GM12878 (cell line): ENCODE measurements at regions of chr12 and their contacts with region 1.

Region 1: DNA sequence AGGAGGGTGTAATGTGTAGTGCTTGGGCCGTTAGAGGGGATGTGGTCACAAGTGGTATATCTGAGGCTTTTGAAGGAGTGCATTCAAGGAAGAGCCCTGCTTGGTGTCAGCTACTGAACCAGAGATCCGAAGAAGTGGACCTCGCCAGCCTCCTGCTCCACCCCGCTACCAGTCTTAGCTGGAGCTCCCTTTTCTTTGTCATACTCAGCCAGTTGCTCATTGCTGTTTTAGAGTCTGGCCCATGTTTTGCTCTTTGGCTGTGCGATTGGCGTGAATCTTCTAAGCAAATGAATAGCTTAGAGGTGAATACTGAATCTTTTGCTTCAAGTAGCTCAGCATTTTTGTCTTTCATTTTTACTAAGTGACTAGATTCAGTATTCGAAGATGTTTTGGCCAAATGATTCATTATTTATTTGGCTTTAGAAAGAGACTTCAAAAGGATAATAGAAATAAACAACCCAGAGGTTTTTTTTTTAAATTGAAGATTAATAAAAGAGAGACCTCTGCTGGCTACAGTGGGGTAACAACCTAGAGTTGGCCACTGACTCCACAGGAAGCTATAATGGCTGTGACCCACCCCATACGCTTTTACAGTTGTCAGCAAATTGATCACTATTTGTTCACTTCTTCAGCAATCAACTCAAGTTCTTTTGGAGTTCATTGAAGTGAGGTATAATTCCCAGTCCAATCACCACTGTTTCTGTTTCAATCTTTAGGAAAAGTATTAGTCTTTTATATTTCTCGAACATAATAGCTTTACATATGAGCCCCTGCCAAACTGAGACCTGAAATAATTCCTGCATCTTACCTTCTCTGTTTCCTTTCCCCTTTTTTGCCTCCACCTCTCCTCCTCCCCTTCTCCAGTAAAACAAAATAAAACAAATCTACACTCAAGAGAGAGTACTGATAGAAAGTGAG is 19.9 kb downstream of the CDKN1B start:
- DNase-seq: peak; percentile 45
- ATAC-seq: peak; percentile 95
- H3K4me3 ChIP-seq: peak overlapping the region; percentile 48; the same call in 1 of the 2 replicates
- H3K27ac ChIP-seq: peak overlapping the region; percentile 71
- H3K4me1 ChIP-seq: peaks cover 5% of the 10 kb centered on the region
- H3K27me3 ChIP-seq: no peaks in the 10 kb centered on the region
- CTCF ChIP-seq: peak; percentile 53 to 63 (median 58); a peak in 5 of 6 replicates
- EP300 ChIP-seq: 0 out of 4 replicates have a peak, but pooled peaks of 1 of the 2 experiments have one; percentile 8
- POLR2A ChIP-seq: peak; percentile 44; the same call in 1 of the 2 replicates
- RAD21 ChIP-seq: peak; percentile 62

Region 2: GRCh38 chr12:12376646-12377448 is 360.2 kb before region 1 on chr12:
- CTCF ChIA-PET with region 1: interaction called, 86 read pairs
- POLR2A ChIA-PET with region 1: interaction called, 4 read pairs
- RAD21 ChIA-PET with region 1: interaction called, 88 read pairs
- SMC1A ChIA-PET with region 1: interaction called, 83 read pairs
- in situ Hi-C with region 1: no loop called
- intact Hi-C with region 1: loop called (anchors 2 kb)
- DNase-seq: peak; percentile 55
- ATAC-seq: peak; percentile 76
- H3K4me3 ChIP-seq: no peak overlapping the region
- H3K27ac ChIP-seq: no peak overlapping the region; the same call in 1 of the 2 replicates
- H3K4me1 ChIP-seq: peaks cover 6% of the 10 kb centered on the region
- H3K27me3 ChIP-seq: no peaks in the 10 kb centered on the region
- CTCF ChIP-seq: peak; percentile 41 to 81 (median 58); a peak in 5 of 6 replicates
- EP300 ChIP-seq: no peak
- POLR2A ChIP-seq: no peak
- RAD21 ChIP-seq: peak; percentile 98

Region 3: GRCh38 chr12:12555656-12556055 is 181.4 kb before region 1 on chr12:
- CTCF ChIA-PET with region 1: interaction called, 13 read pairs
- POLR2A ChIA-PET with region 1: interaction called, 4 read pairs
- RAD21 ChIA-PET with region 1: interaction called, 8 read pairs
- SMC1A ChIA-PET with region 1: interaction called, 8 read pairs
- in situ Hi-C with region 1: no loop called
- intact Hi-C with region 1: loop called (anchors 5 kb)
- DNase-seq: no peak
- ATAC-seq: no peak
- H3K4me3 ChIP-seq: no peak overlapping the region
- H3K27ac ChIP-seq: no peak overlapping the region
- H3K4me1 ChIP-seq: peaks cover 16% of the 10 kb centered on the region
- H3K27me3 ChIP-seq: no peaks in the 10 kb centered on the region
- CTCF ChIP-seq: no peak
- EP300 ChIP-seq: no peak
- POLR2A ChIP-seq: no peak
- RAD21 ChIP-seq: no peak

Region 4: DNA sequence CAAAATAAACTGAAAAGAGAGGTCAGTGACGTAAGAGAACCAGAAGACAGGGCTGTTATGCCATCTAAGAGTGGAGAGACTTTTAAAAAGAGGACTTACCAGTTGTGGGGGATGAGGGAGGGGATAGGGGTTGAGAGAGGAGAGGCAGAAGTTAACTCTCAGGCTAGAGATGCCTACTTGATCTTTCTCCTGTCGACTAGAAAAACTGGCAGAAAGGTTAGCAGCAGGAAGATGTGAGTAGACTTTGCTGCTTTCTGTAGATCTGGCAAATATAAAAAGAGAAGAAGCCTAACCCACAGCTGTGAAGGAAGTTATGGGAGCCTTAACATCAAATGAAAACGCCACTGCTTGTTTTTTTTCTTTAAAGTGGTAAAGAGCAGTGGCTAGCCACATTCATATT is 114.6 kb before region 1 on chr12:
- CTCF ChIA-PET with region 1: interaction called, 12 read pairs
- POLR2A ChIA-PET with region 1: interaction called, 3 read pairs
- RAD21 ChIA-PET with region 1: interaction called, 9 read pairs
- SMC1A ChIA-PET with region 1: interaction called, 8 read pairs
- in situ Hi-C with region 1: no loop called
- intact Hi-C with region 1: no loop called
- DNase-seq: no peak
- ATAC-seq: peak; percentile 29; the same call in 2 of the 3 replicates
- H3K4me3 ChIP-seq: no peak overlapping the region
- H3K27ac ChIP-seq: no peak overlapping the region
- H3K4me1 ChIP-seq: no peaks in the 10 kb centered on the region
- H3K27me3 ChIP-seq: no peaks in the 10 kb centered on the region
- CTCF ChIP-seq: no peak
- EP300 ChIP-seq: no peak
- POLR2A ChIP-seq: no peak
- RAD21 ChIP-seq: no peak

Region 5: DNA sequence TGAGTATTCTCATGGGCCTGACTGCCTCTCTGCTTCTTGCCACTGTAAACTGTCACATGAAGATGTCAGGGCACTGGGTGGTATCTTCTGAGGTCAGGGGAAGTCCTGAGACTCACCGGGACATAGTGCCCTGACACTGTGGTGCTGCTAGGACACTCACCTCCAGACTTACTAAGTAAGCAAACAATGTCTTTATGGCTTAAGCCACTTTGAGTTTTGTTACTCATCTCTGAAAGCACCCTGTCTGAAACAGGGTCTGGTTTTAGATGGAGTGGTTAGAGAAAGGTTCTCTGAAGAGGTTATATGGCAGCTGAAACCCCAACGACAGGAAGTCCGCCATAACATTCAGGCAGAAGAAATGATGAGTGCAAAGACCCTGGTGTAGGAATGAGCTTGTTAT is 63.7 kb before region 1 on chr12:
- CTCF ChIA-PET with region 1: interaction called, 6 read pairs
- POLR2A ChIA-PET with region 1: interaction called, 3 read pairs
- RAD21 ChIA-PET with region 1: interaction called, 9 read pairs
- SMC1A ChIA-PET with region 1: interaction called, 16 read pairs
- in situ Hi-C with region 1: no loop called
- intact Hi-C with region 1: no loop called
- DNase-seq: peak; percentile 65
- ATAC-seq: peak; percentile 96
- H3K4me3 ChIP-seq: no peak overlapping the region
- H3K27ac ChIP-seq: peak overlapping the region; percentile 48
- H3K4me1 ChIP-seq: peaks cover 16% of the 10 kb centered on the region; the same call in 1 of the 2 replicates
- H3K27me3 ChIP-seq: no peaks in the 10 kb centered on the region
- CTCF ChIP-seq: no peak
- EP300 ChIP-seq: peak in 1 of 2 experiments; percentile 10; a peak in 1 of 4 replicates
- POLR2A ChIP-seq: no peak
- RAD21 ChIP-seq: no peak

Region 6: GRCh38 chr12:12724661-12725545 is 12.1 kb before region 1 on chr12:
- CTCF ChIA-PET with region 1: interaction called, 57 read pairs
- POLR2A ChIA-PET with region 1: interaction called, 37 read pairs
- RAD21 ChIA-PET with region 1: interaction called, 82 read pairs
- SMC1A ChIA-PET with region 1: interaction called, 62 read pairs
- in situ Hi-C with region 1: no loop called
- intact Hi-C with region 1: no loop called
- DNase-seq: peak; percentile 94
- ATAC-seq: peak; percentile 55
- H3K4me3 ChIP-seq: peak overlapping the region; percentile 97
- H3K27ac ChIP-seq: peak overlapping the region; percentile 97
- H3K4me1 ChIP-seq: peaks cover 14% of the 10 kb centered on the region
- H3K27me3 ChIP-seq: no peaks in the 10 kb centered on the region
- CTCF ChIP-seq: no peak
- EP300 ChIP-seq: no peak
- POLR2A ChIP-seq: peak; percentile 76
- RAD21 ChIP-seq: no peak